ENCODE measurements at regions of chr5 and their contacts with region 1.

Region 1: DNA sequence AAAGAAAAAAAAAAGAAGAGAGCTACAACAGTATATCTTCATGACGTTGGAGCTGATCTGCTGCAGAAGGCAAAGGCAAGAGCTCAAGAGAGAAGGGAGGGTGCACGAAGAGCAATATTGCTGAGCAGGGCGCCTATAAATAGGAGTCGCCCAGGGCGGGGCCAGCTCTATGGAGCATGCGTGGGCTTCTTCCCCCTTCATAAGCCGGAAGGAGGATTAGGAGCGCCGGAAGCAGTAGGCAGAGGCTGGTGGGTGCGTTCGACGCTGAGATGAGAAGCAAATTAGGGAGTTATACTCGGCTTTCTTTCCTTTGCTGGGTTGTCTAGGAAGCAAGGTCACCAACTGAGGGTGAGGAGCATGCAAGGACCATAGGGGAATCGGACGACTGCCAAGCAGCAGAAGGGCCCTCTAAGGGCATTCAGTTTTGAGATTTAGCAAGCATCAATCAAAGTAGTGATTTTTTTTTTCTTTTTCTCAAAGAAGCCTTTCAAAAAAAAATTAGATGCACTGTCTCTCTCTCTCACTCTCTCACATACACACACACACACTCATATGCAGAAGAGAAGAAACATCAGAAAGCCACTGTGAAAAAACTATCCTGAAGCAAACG is 496.7 kb downstream of the ENC1 start:
- DNase-seq: no peak
- ATAC-seq: no peak
- H3K4me3 ChIP-seq: no peak overlapping the region
- H3K4me3 Mint-ChIP-seq: no peak overlapping the region
- H3K27ac ChIP-seq: no peak overlapping the region
- H3K27ac Mint-ChIP-seq: no peak overlapping the region
- H3K4me1 ChIP-seq: no peaks in the 10 kb centered on the region
- H3K4me1 Mint-ChIP-seq: no peaks in the 10 kb centered on the region
- H3K27me3 ChIP-seq: peaks cover 0 to 5% of the 10 kb centered on the region in 2 experiments
- H3K27me3 Mint-ChIP-seq: peaks cover 8 to 23% of the 10 kb centered on the region in 2 donors

Region 2: GRCh38 chr5:72355706-72356299 is 1788.0 kb before region 1 on chr5:
- CTCF ChIA-PET with region 1: interaction called in 1 of 2 experiments, 10 read pairs
- POLR2A ChIA-PET with region 1: no interaction called
- DNase-seq: no peak
- ATAC-seq: no peak
- H3K4me3 ChIP-seq: no peak overlapping the region
- H3K4me3 Mint-ChIP-seq: no peak overlapping the region
- H3K27ac ChIP-seq: no peak overlapping the region
- H3K27ac Mint-ChIP-seq: no peak overlapping the region
- H3K4me1 ChIP-seq: no peaks in the 10 kb centered on the region
- H3K4me1 Mint-ChIP-seq: no peaks in the 10 kb centered on the region
- H3K27me3 ChIP-seq: no peaks in the 10 kb centered on the region
- H3K27me3 Mint-ChIP-seq: no peaks in the 10 kb centered on the region

Region 3: GRCh38 chr5:74272024-74272775 is 128.4 kb after region 1 on chr5:
- CTCF ChIA-PET with region 1: no interaction called
- POLR2A ChIA-PET with region 1: no interaction called
- DNase-seq: no peak
- ATAC-seq: no peak
- H3K4me3 ChIP-seq: no peak overlapping the region
- H3K4me3 Mint-ChIP-seq: no peak overlapping the region
- H3K27ac ChIP-seq: no peak overlapping the region
- H3K27ac Mint-ChIP-seq: no peak overlapping the region
- H3K4me1 ChIP-seq: no peaks in the 10 kb centered on the region
- H3K4me1 Mint-ChIP-seq: no peaks in the 10 kb centered on the region
- H3K27me3 ChIP-seq: peaks cover 0 to 3% of the 10 kb centered on the region in 2 experiments
- H3K27me3 Mint-ChIP-seq: peaks cover 11 to 24% of the 10 kb centered on the region in 2 donors